ENCODE measurements at regions of chr10 and their contacts with region 1.

Region 1: DNA sequence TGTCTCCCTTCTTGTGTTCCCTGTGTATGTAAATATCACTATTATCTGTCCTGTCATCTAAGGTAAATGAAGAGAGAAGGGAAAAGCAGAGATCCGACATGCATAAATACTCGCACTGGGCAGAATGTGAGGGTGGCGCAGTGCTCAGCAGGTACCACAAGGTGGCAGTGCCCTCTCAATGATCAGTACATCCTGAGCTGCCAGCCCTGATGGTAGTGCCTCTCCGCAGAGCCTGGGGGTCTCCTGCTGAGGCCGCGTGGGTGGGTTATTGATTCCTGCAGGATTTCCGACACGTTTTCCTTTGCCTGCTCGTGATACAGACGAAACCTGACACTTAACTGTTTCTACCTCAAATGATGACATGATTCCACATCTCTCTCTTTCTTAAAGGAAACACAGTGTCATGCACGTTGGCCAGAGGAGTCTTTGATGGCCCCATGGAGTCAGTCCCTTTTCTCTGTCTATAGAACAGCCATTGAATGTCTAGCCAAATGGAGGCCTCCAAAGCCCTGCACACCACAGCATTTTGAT is 19.8 kb downstream of the RGR start:
- DNase-seq: no peak
- H3K4me3 ChIP-seq: no peak overlapping the region
- CTCF ChIP-seq: peak; percentile 98

Region 2: GRCh38 chr10:84076540-84077195 is 188.0 kb before region 1 on chr10:
- CTCF ChIA-PET with region 1: no interaction called
- POLR2A ChIA-PET with region 1: no interaction called
- DNase-seq: no peak
- H3K4me3 ChIP-seq: no peak overlapping the region
- CTCF ChIP-seq: peak; percentile 8

Region 3: GRCh38 chr10:84333864-84334451 is 69.3 kb after region 1 on chr10:
- CTCF ChIA-PET with region 1: interaction called, 28 read pairs
- POLR2A ChIA-PET with region 1: no interaction called
- DNase-seq: no peak
- H3K4me3 ChIP-seq: no peak overlapping the region
- CTCF ChIP-seq: no peak

Region 4: GRCh38 chr10:84375011-84375410 is 110.3 kb after region 1 on chr10:
- CTCF ChIA-PET with region 1: interaction called, 82 read pairs
- POLR2A ChIA-PET with region 1: no interaction called
- DNase-seq: peak; percentile 19
- H3K4me3 ChIP-seq: no peak overlapping the region
- CTCF ChIP-seq: peak; percentile 65

Region 5: GRCh38 chr10:84531396-84531795 is 266.7 kb after region 1 on chr10:
- CTCF ChIA-PET with region 1: interaction called, 631 read pairs
- POLR2A ChIA-PET with region 1: no interaction called
- DNase-seq: no peak
- H3K4me3 ChIP-seq: no peak overlapping the region
- CTCF ChIP-seq: no peak